Activated CD4-positive, alpha-beta T cell treated with anti-CD3 and anti-CD28 coated beads for 36 hours (primary cell): ENCODE measurements at regions of chr11 and their contacts with region 1.

Region 1: DNA sequence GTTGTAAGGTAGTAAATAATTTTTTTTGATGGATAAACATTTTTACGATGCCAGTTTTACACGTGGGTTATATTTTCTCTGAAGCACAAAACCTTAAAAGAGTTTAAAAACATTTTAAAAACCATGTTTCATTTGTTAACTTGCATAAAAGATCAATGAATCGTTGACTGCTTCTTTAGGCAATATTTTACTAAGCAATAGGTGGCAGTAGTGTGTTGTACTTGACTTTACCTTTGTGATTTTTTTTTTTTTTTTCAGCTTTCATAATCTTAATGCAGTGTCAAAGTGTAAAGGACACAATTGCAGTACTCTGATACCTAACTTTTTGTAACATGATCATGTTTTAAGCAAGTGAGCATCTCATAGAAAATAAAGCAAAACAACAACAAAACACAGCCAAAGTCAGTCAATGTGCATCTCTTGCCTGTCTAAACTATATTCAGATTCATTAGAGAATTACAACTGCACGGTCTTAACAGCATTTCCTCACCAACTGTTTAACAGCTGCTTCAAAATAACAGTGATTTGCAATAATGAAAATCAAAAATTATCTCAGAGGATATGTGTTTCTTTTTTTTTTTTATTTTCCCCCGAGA is 27.7 kb downstream of the DNAJC24 start:
- DNase-seq: no peak
- ATAC-seq: no peak
- H3K4me3 Mint-ChIP-seq: no peak overlapping the region
- H3K27ac Mint-ChIP-seq: no peak overlapping the region
- H3K4me1 Mint-ChIP-seq: no peaks in the 10 kb centered on the region
- H3K27me3 Mint-ChIP-seq: no peaks in the 10 kb centered on the region

Region 2: DNA sequence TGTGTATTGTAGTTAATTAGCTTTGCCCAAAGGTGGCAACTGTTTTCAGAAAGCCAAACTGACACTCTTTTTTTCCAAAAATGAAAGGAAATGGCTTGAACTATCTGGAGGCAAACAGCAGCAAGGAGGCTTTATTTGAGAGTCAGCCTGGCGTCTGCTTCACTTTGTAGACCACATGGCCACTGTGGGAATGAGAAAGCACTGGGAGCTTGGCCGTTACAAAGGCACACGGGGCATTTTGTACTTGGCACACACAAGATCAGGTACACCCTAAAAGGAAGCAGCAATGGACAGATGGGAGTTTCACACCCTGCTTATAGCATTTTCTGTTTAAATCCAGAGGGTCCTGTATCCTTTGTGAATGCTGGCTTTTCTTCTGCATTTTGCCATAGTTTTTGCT is 937.5 kb before region 1 on chr11:
- CTCF ChIA-PET with region 1: no interaction called
- POLR2A ChIA-PET with region 1: no interaction called
- intact Hi-C with region 1: no loop called
- DNase-seq: no peak
- ATAC-seq: no peak
- H3K4me3 Mint-ChIP-seq: no peak overlapping the region
- H3K27ac Mint-ChIP-seq: no peak overlapping the region
- H3K4me1 Mint-ChIP-seq: no peaks in the 10 kb centered on the region
- H3K27me3 Mint-ChIP-seq: no peaks in the 10 kb centered on the region

Region 3: GRCh38 chr11:31798554-31799434 is 401.5 kb after region 1 on chr11:
- CTCF ChIA-PET with region 1: no interaction called
- POLR2A ChIA-PET with region 1: no interaction called
- intact Hi-C with region 1: loop called in 1 of 2 experiments (anchors 10 kb)
- DNase-seq: peak; percentile 57
- ATAC-seq: peak; percentile 47
- H3K4me3 Mint-ChIP-seq: no peak overlapping the region
- H3K27ac Mint-ChIP-seq: no peak overlapping the region
- H3K4me1 Mint-ChIP-seq: peaks cover 36% of the 10 kb centered on the region
- H3K27me3 Mint-ChIP-seq: peaks cover 74% of the 10 kb centered on the region

Region 4: DNA sequence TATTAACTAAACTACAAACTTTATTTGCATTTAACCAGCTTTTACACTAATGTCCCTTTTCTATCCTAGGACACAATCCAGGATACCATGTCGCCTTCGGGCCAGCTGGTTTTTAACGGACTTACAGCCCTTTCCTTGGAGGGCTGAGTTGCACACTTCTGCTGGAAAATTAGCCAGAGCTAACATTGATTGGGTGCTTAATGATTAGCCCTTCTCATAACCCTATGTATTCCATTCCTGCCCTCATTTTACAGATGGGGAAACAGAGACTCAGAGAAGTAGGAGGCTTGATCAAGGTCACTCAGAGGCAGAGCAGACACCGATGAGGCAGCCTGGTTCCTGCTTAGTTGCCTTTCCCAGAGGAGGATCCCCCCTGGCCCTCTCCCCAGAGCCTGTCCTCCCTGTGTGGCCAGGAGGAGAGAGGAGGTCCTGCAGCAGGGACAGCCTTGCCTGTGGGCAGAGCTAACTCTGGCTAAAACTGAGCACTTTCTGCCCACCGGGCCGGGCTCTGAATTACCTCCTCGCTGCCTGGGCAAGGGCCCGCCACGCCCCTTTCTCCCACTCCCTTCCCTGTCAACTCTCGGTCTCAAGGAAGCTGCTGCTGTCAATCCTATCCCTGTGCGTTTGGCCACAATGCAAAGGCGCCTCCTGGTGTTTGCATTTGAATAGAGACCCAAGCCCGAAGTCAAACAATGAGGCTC is 473.4 kb after region 1 on chr11:
- CTCF ChIA-PET with region 1: interaction called, 4 read pairs
- POLR2A ChIA-PET with region 1: no interaction called
- intact Hi-C with region 1: loop called (anchors 1 to 2 kb)
- DNase-seq: peak; percentile 48
- ATAC-seq: no peak
- H3K4me3 Mint-ChIP-seq: no peak overlapping the region
- H3K27ac Mint-ChIP-seq: no peak overlapping the region
- H3K4me1 Mint-ChIP-seq: no peaks in the 10 kb centered on the region
- H3K27me3 Mint-ChIP-seq: peaks cover 18% of the 10 kb centered on the region

Region 5: DNA sequence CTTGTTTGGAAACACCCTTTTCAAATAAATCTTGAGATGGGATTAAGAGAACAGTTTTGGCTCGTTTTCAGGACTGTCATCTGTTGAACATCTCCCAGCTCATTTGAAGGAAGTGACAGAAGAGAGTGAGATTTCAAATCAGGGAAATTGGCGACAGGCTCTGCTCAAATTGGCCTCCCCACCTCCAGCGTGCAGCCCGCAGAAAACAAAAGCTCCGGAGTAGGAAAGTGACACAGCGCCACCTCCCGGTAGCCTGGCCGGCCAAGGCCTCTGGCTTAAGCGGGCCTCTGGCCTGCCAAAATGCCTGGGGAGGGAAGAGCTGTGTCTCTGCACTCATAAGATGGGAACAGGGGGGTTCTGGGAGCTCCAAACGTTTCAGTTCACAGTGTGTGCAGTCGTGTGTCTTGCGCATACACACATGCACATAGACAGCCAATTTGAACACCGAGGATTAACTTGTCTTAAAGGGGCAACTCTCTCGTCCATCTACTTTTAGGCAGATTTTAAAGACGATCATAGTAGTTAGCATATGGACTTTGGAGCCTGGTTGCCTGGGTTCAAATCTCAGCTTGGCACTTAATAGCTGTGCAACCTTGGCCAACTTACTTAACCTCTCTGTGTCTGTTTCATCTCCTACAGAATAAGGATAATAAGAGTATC is 560.9 kb after region 1 on chr11:
- CTCF ChIA-PET with region 1: interaction called, 3 read pairs
- POLR2A ChIA-PET with region 1: no interaction called
- intact Hi-C with region 1: loop called (anchors 1 kb)
- DNase-seq: peak; percentile 83
- ATAC-seq: peak; percentile 53
- H3K4me3 Mint-ChIP-seq: no peak overlapping the region
- H3K27ac Mint-ChIP-seq: no peak overlapping the region
- H3K4me1 Mint-ChIP-seq: no peaks in the 10 kb centered on the region
- H3K27me3 Mint-ChIP-seq: no peaks in the 10 kb centered on the region

Region 6: GRCh38 chr11:32006799-32007388 is 609.6 kb after region 1 on chr11:
- CTCF ChIA-PET with region 1: no interaction called
- POLR2A ChIA-PET with region 1: no interaction called
- intact Hi-C with region 1: loop called in 1 of 2 experiments (anchors 2 kb)
- DNase-seq: peak; percentile 24
- ATAC-seq: peak; percentile 65
- H3K4me3 Mint-ChIP-seq: no peak overlapping the region
- H3K27ac Mint-ChIP-seq: no peak overlapping the region
- H3K4me1 Mint-ChIP-seq: no peaks in the 10 kb centered on the region
- H3K27me3 Mint-ChIP-seq: peaks cover 31% of the 10 kb centered on the region

Region 7: GRCh38 chr11:32168924-32169323 is 771.6 kb after region 1 on chr11:
- CTCF ChIA-PET with region 1: no interaction called
- POLR2A ChIA-PET with region 1: no interaction called
- intact Hi-C with region 1: no loop called
- DNase-seq: no peak
- ATAC-seq: no peak
- H3K4me3 Mint-ChIP-seq: no peak overlapping the region
- H3K27ac Mint-ChIP-seq: no peak overlapping the region
- H3K4me1 Mint-ChIP-seq: peaks cover 14% of the 10 kb centered on the region
- H3K27me3 Mint-ChIP-seq: peaks cover 2% of the 10 kb centered on the region